ENCODE measurements at regions of chr1 and their contacts with region 1.

Region 1: GRCh38 chr1:33055210-33056008 is 18.7 kb upstream of the AK2 start:
- DNase-seq: peak; percentile 34
- H3K4me3 Mint-ChIP-seq: no peak overlapping the region
- H3K27ac Mint-ChIP-seq: no peak overlapping the region
- H3K4me1 Mint-ChIP-seq: peaks cover 8% of the 10 kb centered on the region
- H3K27me3 Mint-ChIP-seq: peaks cover 4% of the 10 kb centered on the region

Region 2: GRCh38 chr1:33045246-33045645 is 10.2 kb before region 1 on chr1:
- CTCF ChIA-PET with region 1: interaction called, 11 read pairs
- POLR2A ChIA-PET with region 1: no interaction called
- DNase-seq: no peak
- H3K4me3 Mint-ChIP-seq: no peak overlapping the region
- H3K27ac Mint-ChIP-seq: peak overlapping the region; percentile 48
- H3K4me1 Mint-ChIP-seq: peaks cover 30% of the 10 kb centered on the region
- H3K27me3 Mint-ChIP-seq: peaks cover 4% of the 10 kb centered on the region